ENCODE measurements at regions of chr13 and their contacts with region 1.

Region 1: GRCh38 chr13:80463673-80464352 is 122.9 kb upstream of the SPRY2 start:
- DNase-seq: peak in 1 of 5 donors; percentile 19
- ATAC-seq: peak; percentile 51 to 73 (median 68)
- H3K4me3 ChIP-seq: no peak overlapping the region
- H3K27ac ChIP-seq: peak overlapping the region in 5 of 12 donors; percentile 6 to 53 (median 39)
- H3K4me1 ChIP-seq: peaks cover 2 to 30% (median 11%) of the 10 kb centered on the region in 12 donors
- H3K27me3 ChIP-seq: no peaks in the 10 kb centered on the region
- CTCF ChIP-seq: peak in 1 of 12 donors; percentile 3
- POLR2A ChIP-seq: no peak

Region 2: GRCh38 chr13:80436571-80437169 is 27.1 kb before region 1 on chr13:
- intact Hi-C with region 1: loop called in 1 of 10 experiments (anchors 2 kb)
- DNase-seq: peak in 3 of 5 donors; percentile 36 to 45 (median 41)
- ATAC-seq: peak; percentile 75 to 94 (median 89)
- H3K4me3 ChIP-seq: no peak overlapping the region
- H3K27ac ChIP-seq: peak overlapping the region; percentile 1 to 85 (median 52)
- H3K4me1 ChIP-seq: peaks cover 0 to 23% (median 7%) of the 10 kb centered on the region in 12 donors
- H3K27me3 ChIP-seq: no peaks in the 10 kb centered on the region
- CTCF ChIP-seq: no peak
- POLR2A ChIP-seq: no peak